Endothelial cell of umbilical vein (primary cell): ENCODE measurements at regions of chr5 and their contacts with region 1.

Region 1: GRCh38 chr5:76601470-76601869 is 21.7 kb downstream of the F2RL2 start:
- DNase-seq: peak; percentile 78
- H3K4me3 ChIP-seq: no peak overlapping the region
- H3K27ac ChIP-seq: no peak overlapping the region
- H3K4me1 ChIP-seq: peaks cover 4% of the 10 kb centered on the region
- H3K27me3 ChIP-seq: peaks cover 0 to 2% of the 10 kb centered on the region in 2 experiments
- CTCF ChIP-seq: peak; percentile 52
- POLR2A ChIP-seq: no peak

Region 2: DNA sequence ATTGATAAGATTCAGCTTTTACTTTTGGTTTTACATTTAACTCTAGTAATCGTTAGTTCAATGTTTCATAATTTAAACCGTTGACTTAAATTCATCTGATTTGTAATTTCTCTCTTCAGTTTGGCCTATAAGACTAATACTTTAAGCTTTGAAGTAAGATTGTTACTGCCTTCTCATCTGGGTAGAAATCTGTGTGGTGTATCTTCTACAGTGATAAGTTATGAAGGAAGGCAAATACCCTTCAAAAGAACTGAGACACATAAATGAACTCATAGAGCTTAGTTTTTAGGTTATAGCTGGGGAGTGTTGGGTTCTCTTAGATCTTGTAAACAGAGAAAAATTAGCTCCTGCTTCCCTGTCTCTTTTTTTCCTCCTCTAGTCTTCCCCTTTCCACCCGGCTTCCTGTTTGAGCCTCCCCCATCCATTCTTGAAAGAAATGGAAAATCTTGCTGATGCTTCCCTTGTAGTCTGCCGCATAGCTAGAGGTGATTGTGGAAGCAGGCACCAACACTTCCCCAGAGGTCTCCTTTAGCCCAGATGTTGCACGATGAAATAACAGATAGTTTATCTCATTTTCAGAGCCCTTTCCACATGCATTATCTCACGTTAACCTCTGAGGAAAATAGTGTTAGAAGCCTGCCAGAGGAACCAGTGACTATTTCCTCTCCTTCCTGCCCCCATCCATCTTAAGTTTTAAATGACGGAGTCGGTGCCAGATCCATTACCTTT is 23.8 kb after region 1 on chr5:
- CTCF ChIA-PET with region 1: interaction called, 44 read pairs
- POLR2A ChIA-PET with region 1: no interaction called
- dilution Hi-C with region 1: no loop called
- intact Hi-C with region 1: no loop called
- DNase-seq: peak; percentile 80
- H3K4me3 ChIP-seq: no peak overlapping the region
- H3K27ac ChIP-seq: peak overlapping the region; percentile 59
- H3K4me1 ChIP-seq: peaks cover 17% of the 10 kb centered on the region
- H3K27me3 ChIP-seq: no peaks in the 10 kb centered on the region
- CTCF ChIP-seq: no peak
- POLR2A ChIP-seq: no peak

Region 3: GRCh38 chr5:76641514-76642120 is 40.1 kb after region 1 on chr5:
- CTCF ChIA-PET with region 1: interaction called, 126 read pairs
- POLR2A ChIA-PET with region 1: no interaction called
- dilution Hi-C with region 1: no loop called
- intact Hi-C with region 1: loop called (anchors 1 kb)
- DNase-seq: peak; percentile 85
- H3K4me3 ChIP-seq: no peak overlapping the region
- H3K27ac ChIP-seq: peak overlapping the region; percentile 84
- H3K4me1 ChIP-seq: peaks cover 34% of the 10 kb centered on the region
- H3K27me3 ChIP-seq: no peaks in the 10 kb centered on the region
- CTCF ChIP-seq: peak; percentile 66 to 72
- POLR2A ChIP-seq: no peak

Region 4: DNA sequence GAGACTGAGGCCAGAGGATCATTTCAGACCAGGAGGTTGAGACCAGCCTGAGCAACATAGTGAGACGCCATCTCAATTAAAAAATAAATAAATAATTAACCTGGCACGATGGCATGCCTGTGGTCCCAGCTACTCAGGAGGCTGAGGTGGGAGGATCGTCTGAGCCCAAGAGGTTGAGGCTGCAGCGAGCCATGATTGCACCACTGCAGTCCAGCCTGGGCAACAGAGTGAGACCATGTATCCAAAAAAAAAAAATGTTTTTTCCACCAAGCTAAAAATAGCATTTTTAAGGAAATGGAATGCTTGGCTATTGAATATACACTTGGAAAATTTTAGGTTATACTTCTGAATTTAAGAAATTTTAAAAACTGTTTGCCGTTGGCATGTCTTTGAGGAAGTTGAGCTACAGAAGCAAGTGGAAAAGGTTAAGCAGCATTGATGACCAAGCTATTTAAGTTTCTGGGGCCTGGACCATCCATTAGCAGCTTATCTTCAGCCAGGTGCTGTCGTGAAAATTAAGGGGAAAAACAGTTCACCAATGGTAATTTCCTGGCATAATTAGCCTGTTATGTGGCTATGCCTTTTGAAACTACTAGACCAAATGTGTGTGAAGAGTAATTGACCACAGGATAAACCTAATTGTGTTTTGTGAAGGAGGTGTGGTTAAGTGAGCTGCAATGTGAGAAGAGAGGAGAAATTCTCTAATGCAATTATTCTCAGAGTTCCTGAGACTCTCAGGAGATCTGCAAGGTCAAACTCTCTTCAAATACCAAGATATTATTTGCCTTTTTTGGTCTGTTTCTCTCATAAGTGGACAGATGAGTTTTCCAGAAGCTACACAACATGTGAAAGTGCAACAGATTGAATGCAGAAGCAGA is 135.4 kb after region 1 on chr5:
- CTCF ChIA-PET with region 1: interaction called, 13 read pairs
- POLR2A ChIA-PET with region 1: no interaction called
- dilution Hi-C with region 1: no loop called
- intact Hi-C with region 1: no loop called
- DNase-seq: peak; percentile 40
- H3K4me3 ChIP-seq: no peak overlapping the region
- H3K27ac ChIP-seq: peak overlapping the region; percentile 40
- H3K4me1 ChIP-seq: peaks cover 23% of the 10 kb centered on the region
- H3K27me3 ChIP-seq: no peaks in the 10 kb centered on the region
- CTCF ChIP-seq: no peak
- POLR2A ChIP-seq: peak; percentile 52

Region 5: GRCh38 chr5:76867827-76868693 is 266.6 kb after region 1 on chr5:
- CTCF ChIA-PET with region 1: interaction called, 5 read pairs
- POLR2A ChIA-PET with region 1: no interaction called
- dilution Hi-C with region 1: no loop called
- intact Hi-C with region 1: loop called (anchors 5 kb)
- DNase-seq: peak; percentile 86
- H3K4me3 ChIP-seq: no peak overlapping the region
- H3K27ac ChIP-seq: no peak overlapping the region
- H3K4me1 ChIP-seq: no peaks in the 10 kb centered on the region
- H3K27me3 ChIP-seq: no peaks in the 10 kb centered on the region
- CTCF ChIP-seq: peak; percentile 71 to 79
- POLR2A ChIP-seq: no peak

Region 6: DNA sequence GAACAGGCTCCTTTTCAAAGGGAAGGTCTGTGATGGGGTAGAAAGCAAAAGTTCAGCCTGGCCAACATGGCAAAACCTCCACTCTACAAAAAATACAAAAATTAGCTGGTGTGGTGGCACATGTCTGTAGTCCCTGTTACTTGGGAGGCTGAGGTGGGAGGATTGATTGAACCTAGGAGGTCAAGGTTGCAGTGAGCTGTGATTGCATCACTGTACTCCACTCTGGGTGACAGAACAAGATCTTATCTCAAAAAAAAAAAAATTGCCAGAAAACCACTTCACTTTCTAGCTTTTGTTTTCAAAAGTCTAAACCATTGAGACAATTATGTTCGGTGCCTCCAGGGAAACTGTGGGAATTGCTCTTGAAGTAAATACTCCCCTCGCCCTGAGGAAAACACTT is 291.8 kb after region 1 on chr5:
- CTCF ChIA-PET with region 1: no interaction called
- POLR2A ChIA-PET with region 1: no interaction called
- dilution Hi-C with region 1: no loop called
- intact Hi-C with region 1: no loop called
- DNase-seq: no peak
- H3K4me3 ChIP-seq: no peak overlapping the region
- H3K27ac ChIP-seq: no peak overlapping the region
- H3K4me1 ChIP-seq: no peaks in the 10 kb centered on the region
- H3K27me3 ChIP-seq: peaks cover 4 to 9% of the 10 kb centered on the region in 2 experiments
- CTCF ChIP-seq: no peak
- POLR2A ChIP-seq: no peak

Region 7: GRCh38 chr5:77076961-77077823 is 475.7 kb after region 1 on chr5:
- CTCF ChIA-PET with region 1: interaction called, 8 read pairs
- POLR2A ChIA-PET with region 1: no interaction called
- dilution Hi-C with region 1: no loop called
- intact Hi-C with region 1: loop called (anchors 2 kb)
- DNase-seq: peak; percentile 61
- H3K4me3 ChIP-seq: peak overlapping the region in 2 of 3 experiments; percentile 35
- H3K27ac ChIP-seq: no peak overlapping the region
- H3K4me1 ChIP-seq: peaks cover 3% of the 10 kb centered on the region
- H3K27me3 ChIP-seq: no peaks in the 10 kb centered on the region
- CTCF ChIP-seq: peak; percentile 79 to 89
- POLR2A ChIP-seq: no peak

Region 8: DNA sequence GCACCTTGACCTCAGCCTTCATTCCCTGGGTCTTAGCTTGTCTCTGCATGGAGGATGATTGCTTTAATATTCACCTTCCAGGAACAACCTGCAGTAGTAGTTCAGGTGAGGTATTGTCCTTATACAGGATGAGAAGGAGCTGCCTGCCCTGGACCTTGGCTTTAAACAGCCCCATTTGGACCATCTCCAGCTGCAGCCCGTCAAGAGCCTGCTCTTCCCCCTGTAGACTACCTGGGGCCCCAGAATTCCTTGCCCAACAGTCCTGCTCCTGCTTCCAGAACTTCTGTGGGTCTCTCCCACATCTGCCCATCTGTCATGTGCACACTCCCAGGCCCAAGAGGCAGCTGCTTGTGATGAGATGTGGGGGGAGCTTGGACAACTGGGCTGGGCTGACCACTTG is 1049.2 kb after region 1 on chr5:
- CTCF ChIA-PET with region 1: no interaction called
- POLR2A ChIA-PET with region 1: no interaction called
- dilution Hi-C with region 1: no loop called
- intact Hi-C with region 1: no loop called
- DNase-seq: no peak
- H3K4me3 ChIP-seq: no peak overlapping the region
- H3K27ac ChIP-seq: no peak overlapping the region
- H3K4me1 ChIP-seq: no peaks in the 10 kb centered on the region
- H3K27me3 ChIP-seq: peaks cover 35 to 65% of the 10 kb centered on the region in 2 experiments
- CTCF ChIP-seq: no peak
- POLR2A ChIP-seq: no peak